ENCODE measurements at regions of chr14 and their contacts with region 1.

Region 1: GRCh38 chr14:47278234-47278842 is 397.1 kb downstream of the MDGA2 start:
- DNase-seq: peak; percentile 71
- H3K4me3 ChIP-seq: no peak overlapping the region
- H3K27ac ChIP-seq: no peak overlapping the region
- H3K4me1 ChIP-seq: no peaks in the 10 kb centered on the region
- H3K27me3 ChIP-seq: peaks cover under 1% of the 10 kb centered on the region
- CTCF ChIP-seq: peak; percentile 85

Region 2: GRCh38 chr14:46322730-46323403 is 955.5 kb before region 1 on chr14:
- CTCF ChIA-PET with region 1: no interaction called
- POLR2A ChIA-PET with region 1: no interaction called
- intact Hi-C with region 1: no loop called
- DNase-seq: no peak
- H3K4me3 ChIP-seq: no peak overlapping the region
- H3K27ac ChIP-seq: no peak overlapping the region
- H3K4me1 ChIP-seq: no peaks in the 10 kb centered on the region
- H3K27me3 ChIP-seq: no peaks in the 10 kb centered on the region
- CTCF ChIP-seq: no peak

Region 3: DNA sequence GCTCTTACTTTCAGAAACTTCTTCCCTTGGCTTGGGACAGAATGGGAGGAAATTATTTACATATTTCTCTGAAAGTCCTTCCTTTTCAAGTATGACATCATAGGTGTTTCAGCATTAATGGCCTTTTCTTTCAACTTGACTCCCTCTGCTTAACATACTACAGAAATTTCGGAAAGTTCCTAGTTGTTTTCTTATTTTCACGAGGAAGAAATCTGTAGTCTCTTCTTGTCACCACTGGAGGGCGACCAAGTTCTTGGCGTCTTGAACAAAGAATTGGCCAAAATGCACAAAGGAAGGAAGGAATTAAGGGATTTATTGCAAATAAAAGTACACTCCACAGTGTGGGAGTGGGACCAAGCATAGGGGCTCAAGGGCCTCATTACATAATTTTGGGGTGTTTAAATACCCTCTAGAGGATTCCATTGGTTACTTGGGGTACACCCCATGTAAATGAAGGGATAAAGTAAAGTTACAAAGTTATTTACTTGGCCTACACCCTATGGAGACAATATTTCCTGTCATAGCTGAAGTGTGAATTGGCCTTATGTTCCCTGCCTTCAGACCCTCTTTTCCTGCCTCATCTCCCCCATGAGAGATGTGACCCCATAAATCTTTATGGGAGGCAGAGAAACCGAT is 697.2 kb before region 1 on chr14:
- CTCF ChIA-PET with region 1: interaction called, 3 read pairs
- POLR2A ChIA-PET with region 1: no interaction called
- intact Hi-C with region 1: loop called (anchors 10 kb)
- DNase-seq: peak; percentile 80
- H3K4me3 ChIP-seq: no peak overlapping the region
- H3K27ac ChIP-seq: no peak overlapping the region
- H3K4me1 ChIP-seq: peaks cover 7% of the 10 kb centered on the region
- H3K27me3 ChIP-seq: no peaks in the 10 kb centered on the region
- CTCF ChIP-seq: peak; percentile 83

Region 4: DNA sequence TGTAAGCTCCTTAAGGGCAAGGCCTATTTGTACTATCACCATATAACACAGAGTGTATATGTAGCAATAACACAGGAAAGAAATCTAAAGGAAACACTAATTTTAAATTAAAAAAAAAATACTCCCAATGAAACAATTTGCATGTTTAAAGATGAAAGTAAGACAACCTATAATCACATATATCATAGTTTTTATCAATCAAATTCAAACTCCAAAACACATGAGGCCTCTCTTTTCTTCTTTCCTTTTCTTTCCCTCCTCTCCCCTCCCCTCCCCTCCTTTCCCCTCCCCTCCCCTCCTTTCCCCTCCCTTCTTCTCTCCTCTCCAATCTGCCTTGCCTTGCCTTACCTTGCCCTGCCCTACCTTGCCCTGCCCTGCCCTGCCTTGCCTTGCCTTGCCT is 221.0 kb before region 1 on chr14:
- CTCF ChIA-PET with region 1: no interaction called
- POLR2A ChIA-PET with region 1: no interaction called
- intact Hi-C with region 1: loop called (anchors 5 kb)
- DNase-seq: no peak
- H3K4me3 ChIP-seq: no peak overlapping the region
- H3K27ac ChIP-seq: no peak overlapping the region
- H3K4me1 ChIP-seq: no peaks in the 10 kb centered on the region
- H3K27me3 ChIP-seq: peaks cover 5% of the 10 kb centered on the region
- CTCF ChIP-seq: no peak

Measured in A673 (cell line).